CD14-positive monocyte (primary cell): ENCODE measurements at regions of chr7 and their contacts with region 1.

Region 1: GRCh38 chr7:43439631-43440401 is 143.1 kb upstream of the STK17A start:
- DNase-seq: peak; percentile 28 to 54 (median 31)
- H3K4me3 ChIP-seq: no peak overlapping the region
- H3K4me3 Mint-ChIP-seq: no peak overlapping the region
- H3K27ac ChIP-seq: no peak overlapping the region
- H3K27ac Mint-ChIP-seq: peak overlapping the region in 1 of 7 donors; percentile 57
- H3K4me1 ChIP-seq: no peaks in the 10 kb centered on the region
- H3K4me1 Mint-ChIP-seq: no peaks in the 10 kb centered on the region
- H3K27me3 ChIP-seq: no peaks in the 10 kb centered on the region
- H3K27me3 Mint-ChIP-seq: peaks cover 2 to 5% (median 5%) of the 10 kb centered on the region in 3 donors
- CTCF ChIP-seq: peak; percentile 82

Region 2: DNA sequence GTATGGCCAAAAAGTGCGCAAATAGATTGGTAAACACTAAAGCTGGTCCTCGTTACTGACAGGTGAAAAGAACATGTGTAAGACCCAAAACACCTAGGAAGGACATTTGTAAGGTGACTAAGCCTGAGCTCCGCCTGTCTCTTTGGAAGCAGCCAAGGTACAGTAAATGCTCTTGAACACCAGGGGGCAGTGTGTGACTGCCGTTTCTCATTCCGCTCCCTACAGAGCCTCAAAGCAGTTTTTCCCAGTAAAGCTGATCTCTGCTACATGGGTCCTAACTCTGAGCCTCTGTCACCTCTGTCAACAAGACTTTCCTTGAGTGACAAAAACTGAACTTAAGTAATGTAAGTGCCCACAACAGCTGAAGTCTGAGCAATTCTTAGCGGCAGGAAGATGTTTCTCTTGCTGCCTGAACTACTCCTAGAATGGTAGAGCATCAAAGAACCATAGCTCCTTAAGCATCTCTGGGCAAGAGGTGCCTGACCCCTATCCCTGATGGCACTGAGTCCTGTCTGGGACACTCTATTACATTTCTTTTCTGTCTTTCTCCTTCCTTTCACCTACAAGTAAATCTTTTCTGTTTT is 1499.0 kb before region 1 on chr7:
- intact Hi-C with region 1: loop called in 1 of 2 experiments (anchors 5 kb)
- DNase-seq: peak; percentile 51 to 71 (median 68)
- H3K4me3 ChIP-seq: no peak overlapping the region
- H3K4me3 Mint-ChIP-seq: no peak overlapping the region
- H3K27ac ChIP-seq: no peak overlapping the region
- H3K27ac Mint-ChIP-seq: peak overlapping the region in 1 of 7 donors; percentile 71
- H3K4me1 ChIP-seq: peaks cover 4 to 7% of the 10 kb centered on the region in 2 donors
- H3K4me1 Mint-ChIP-seq: peaks cover 8% of the 10 kb centered on the region
- H3K27me3 ChIP-seq: peaks cover 0 to 14% of the 10 kb centered on the region in 2 donors
- H3K27me3 Mint-ChIP-seq: peaks cover 10 to 25% (median 16%) of the 10 kb centered on the region in 3 donors
- CTCF ChIP-seq: peak; percentile 96